ENCODE measurements at regions of chr7 and their contacts with region 1.

Region 1: DNA sequence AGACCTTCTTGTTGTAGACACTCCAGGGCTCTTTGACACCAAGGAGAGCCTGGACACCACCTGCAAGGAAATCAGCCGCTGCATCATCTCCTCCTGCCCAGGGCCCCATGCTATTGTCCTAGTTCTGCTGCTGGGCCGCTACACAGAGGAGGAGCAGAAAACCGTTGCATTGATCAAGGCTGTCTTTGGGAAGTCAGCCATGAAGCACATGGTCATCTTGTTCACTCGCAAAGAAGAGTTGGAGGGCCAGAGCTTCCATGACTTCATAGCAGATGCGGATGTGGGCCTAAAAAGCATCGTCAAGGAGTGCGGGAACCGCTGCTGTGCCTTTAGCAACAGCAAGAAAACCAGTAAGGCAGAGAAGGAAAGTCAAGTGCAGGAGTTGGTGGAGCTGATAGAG is 5.5 kb downstream of the GIMAP7 start:
- DNase-seq: peak in 4 of 9 donors; percentile 17 to 51 (median 42)
- ATAC-seq: peak; percentile 29
- H3K4me3 ChIP-seq: peak overlapping the region; percentile 59
- H3K4me3 Mint-ChIP-seq: peak overlapping the region; percentile 93 to 100 (median 99)
- H3K27ac ChIP-seq: peak overlapping the region; percentile 84
- H3K27ac Mint-ChIP-seq: peak overlapping the region; percentile 80 to 98 (median 94)
- H3K4me1 ChIP-seq: peaks cover 8 to 9% of the 10 kb centered on the region in 2 donors
- H3K4me1 Mint-ChIP-seq: peaks cover 22 to 42% (median 36%) of the 10 kb centered on the region in 7 donors
- H3K27me3 ChIP-seq: no peaks in the 10 kb centered on the region
- H3K27me3 Mint-ChIP-seq: no peaks in the 10 kb centered on the region

Region 2: DNA sequence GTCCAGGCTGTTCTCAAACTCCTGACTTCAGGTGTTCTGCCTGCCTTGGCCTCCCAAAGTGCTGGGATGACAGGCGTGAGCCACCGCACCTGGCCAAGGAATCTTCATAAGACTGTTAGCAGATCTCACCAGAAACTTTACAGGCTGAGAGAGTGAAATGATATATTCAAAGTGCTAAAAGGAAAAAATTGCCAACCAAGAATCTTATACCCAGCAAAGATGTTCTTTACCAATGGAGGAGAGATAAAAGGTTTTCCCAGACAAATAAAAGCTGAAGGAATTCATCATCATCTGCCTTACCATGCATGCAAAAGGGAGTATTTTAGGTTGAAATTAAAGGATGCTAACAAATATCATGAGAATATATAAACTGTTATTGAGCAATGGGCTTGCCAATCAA is 18.1 kb after region 1 on chr7:
- CTCF ChIA-PET with region 1: interaction called, 3 read pairs
- POLR2A ChIA-PET with region 1: interaction called, 13 read pairs
- intact Hi-C with region 1: loop called in 1 of 2 experiments (anchors 2 kb)
- DNase-seq: peak in 1 of 9 donors; percentile 20
- ATAC-seq: no peak
- H3K4me3 ChIP-seq: no peak overlapping the region
- H3K4me3 Mint-ChIP-seq: peak overlapping the region in 1 of 10 donors; percentile 16
- H3K27ac ChIP-seq: no peak overlapping the region
- H3K27ac Mint-ChIP-seq: peak overlapping the region in 1 of 9 donors; percentile 43
- H3K4me1 ChIP-seq: no peaks in the 10 kb centered on the region
- H3K4me1 Mint-ChIP-seq: peaks cover 3 to 39% (median 20%) of the 10 kb centered on the region in 7 donors
- H3K27me3 ChIP-seq: no peaks in the 10 kb centered on the region
- H3K27me3 Mint-ChIP-seq: no peaks in the 10 kb centered on the region

Region 3: DNA sequence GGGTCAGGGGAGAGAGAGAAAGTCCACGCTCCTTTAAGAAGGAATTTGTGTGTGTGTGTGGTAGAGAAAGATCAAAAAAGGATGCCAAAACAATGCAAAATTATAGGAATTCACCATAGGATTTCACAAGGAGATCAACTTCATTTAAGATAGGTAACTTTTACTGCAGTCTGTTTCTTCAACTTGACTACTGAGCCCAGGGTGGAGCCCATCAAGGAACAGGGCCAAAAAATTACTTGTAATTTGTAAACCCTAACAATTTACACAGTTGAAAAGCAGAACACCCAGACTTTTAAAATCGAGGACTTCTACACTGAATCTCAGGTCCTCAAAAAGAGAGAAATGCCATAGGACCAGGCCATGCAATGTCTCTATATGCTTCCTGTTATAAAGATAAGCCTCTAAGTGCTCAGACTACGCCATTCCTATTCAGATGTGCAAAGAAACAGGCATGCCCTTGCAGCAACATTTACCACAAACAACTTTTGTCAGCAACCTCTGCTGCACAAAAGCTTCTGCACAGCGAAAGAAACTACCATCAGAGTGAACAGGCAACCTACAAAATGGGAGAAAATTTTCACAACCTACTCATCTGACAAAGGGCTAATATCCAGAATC is 36.5 kb after region 1 on chr7:
- CTCF ChIA-PET with region 1: no interaction called
- POLR2A ChIA-PET with region 1: interaction called, 526 read pairs
- intact Hi-C with region 1: loop called in 1 of 2 experiments (anchors 1 kb)
- DNase-seq: peak in 7 of 9 donors; percentile 45 to 84 (median 73)
- ATAC-seq: peak; percentile 99
- H3K4me3 ChIP-seq: peak overlapping the region; percentile 42
- H3K4me3 Mint-ChIP-seq: peak overlapping the region; percentile 48 to 92 (median 78)
- H3K27ac ChIP-seq: peak overlapping the region; percentile 66
- H3K27ac Mint-ChIP-seq: peak overlapping the region; percentile 89 to 99 (median 94)
- H3K4me1 ChIP-seq: peaks cover 47 to 74% of the 10 kb centered on the region in 2 donors
- H3K4me1 Mint-ChIP-seq: peaks cover 45 to 95% (median 90%) of the 10 kb centered on the region in 7 donors
- H3K27me3 ChIP-seq: no peaks in the 10 kb centered on the region
- H3K27me3 Mint-ChIP-seq: no peaks in the 10 kb centered on the region

Region 4: DNA sequence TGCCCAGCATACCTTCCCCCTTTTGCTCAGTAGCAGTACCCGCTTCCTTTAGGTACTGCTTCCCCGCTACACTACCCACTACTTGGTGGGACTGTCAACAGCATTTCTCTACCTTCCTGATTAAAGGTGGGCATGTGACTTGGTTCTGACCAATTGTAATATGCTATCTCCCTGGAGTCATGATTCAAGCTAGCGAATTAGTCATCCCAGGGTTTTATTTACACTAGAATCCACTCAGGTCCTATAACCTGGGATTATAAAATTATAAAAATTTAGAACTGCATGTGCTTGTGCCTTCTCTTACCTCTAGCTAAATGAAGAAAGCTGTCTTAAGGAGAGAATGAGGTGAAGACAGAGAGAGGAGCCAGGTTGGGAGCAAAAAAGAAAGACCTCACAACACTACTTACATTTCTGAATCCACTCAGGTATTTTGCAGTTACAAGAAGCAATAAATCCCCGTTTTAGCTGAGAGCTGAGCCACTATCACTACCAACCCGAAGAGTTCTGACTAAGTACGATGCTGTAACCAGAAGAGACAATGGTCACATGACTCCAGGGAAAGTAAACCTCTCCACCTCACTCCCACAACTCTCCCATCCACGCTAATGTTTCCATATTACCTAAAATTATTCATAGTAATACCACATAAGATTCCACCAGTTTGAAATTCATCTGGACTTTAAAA is 637.6 kb after region 1 on chr7:
- CTCF ChIA-PET with region 1: no interaction called
- POLR2A ChIA-PET with region 1: no interaction called
- intact Hi-C with region 1: no loop called
- DNase-seq: no peak
- ATAC-seq: no peak
- H3K4me3 ChIP-seq: no peak overlapping the region
- H3K4me3 Mint-ChIP-seq: no peak overlapping the region
- H3K27ac ChIP-seq: no peak overlapping the region
- H3K27ac Mint-ChIP-seq: no peak overlapping the region
- H3K4me1 ChIP-seq: no peaks in the 10 kb centered on the region
- H3K4me1 Mint-ChIP-seq: no peaks in the 10 kb centered on the region
- H3K27me3 ChIP-seq: no peaks in the 10 kb centered on the region
- H3K27me3 Mint-ChIP-seq: peaks cover 13 to 34% (median 33%) of the 10 kb centered on the region in 5 donors